A673 (cell line): ENCODE measurements at regions of chr19 and their contacts with region 1.

Region 1: DNA sequence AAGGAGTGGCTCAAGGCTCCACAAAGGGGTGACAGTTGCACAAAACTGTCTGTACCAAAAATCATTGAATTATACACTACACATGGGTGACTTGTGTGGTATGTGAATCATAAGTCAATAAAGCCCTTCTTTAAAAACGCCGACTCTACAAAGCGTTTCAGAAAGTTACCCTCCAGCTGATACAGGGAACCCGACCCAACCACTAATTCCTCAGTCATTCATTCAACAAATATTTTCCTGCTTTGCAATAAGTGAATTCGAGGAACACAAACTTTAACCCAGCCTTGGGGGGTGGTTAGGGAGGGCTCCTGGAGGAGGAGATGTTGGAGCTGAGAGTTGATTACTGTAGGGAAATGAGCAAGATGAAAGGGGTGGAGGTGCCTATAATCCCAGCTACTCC is 32.0 kb downstream of the LTBP4 start:
- DNase-seq: no peak
- H3K4me3 ChIP-seq: no peak overlapping the region
- H3K27ac ChIP-seq: no peak overlapping the region
- H3K4me1 ChIP-seq: no peaks in the 10 kb centered on the region
- H3K27me3 ChIP-seq: no peaks in the 10 kb centered on the region
- CTCF ChIP-seq: no peak

Region 2: GRCh38 chr19:40139533-40140287 is 493.5 kb before region 1 on chr19:
- CTCF ChIA-PET with region 1: no interaction called
- POLR2A ChIA-PET with region 1: no interaction called
- intact Hi-C with region 1: loop called (anchors 10 kb)
- DNase-seq: peak; percentile 73
- H3K4me3 ChIP-seq: no peak overlapping the region
- H3K27ac ChIP-seq: no peak overlapping the region
- H3K4me1 ChIP-seq: peaks cover 24% of the 10 kb centered on the region
- H3K27me3 ChIP-seq: no peaks in the 10 kb centered on the region
- CTCF ChIP-seq: peak; percentile 80

Region 3: DNA sequence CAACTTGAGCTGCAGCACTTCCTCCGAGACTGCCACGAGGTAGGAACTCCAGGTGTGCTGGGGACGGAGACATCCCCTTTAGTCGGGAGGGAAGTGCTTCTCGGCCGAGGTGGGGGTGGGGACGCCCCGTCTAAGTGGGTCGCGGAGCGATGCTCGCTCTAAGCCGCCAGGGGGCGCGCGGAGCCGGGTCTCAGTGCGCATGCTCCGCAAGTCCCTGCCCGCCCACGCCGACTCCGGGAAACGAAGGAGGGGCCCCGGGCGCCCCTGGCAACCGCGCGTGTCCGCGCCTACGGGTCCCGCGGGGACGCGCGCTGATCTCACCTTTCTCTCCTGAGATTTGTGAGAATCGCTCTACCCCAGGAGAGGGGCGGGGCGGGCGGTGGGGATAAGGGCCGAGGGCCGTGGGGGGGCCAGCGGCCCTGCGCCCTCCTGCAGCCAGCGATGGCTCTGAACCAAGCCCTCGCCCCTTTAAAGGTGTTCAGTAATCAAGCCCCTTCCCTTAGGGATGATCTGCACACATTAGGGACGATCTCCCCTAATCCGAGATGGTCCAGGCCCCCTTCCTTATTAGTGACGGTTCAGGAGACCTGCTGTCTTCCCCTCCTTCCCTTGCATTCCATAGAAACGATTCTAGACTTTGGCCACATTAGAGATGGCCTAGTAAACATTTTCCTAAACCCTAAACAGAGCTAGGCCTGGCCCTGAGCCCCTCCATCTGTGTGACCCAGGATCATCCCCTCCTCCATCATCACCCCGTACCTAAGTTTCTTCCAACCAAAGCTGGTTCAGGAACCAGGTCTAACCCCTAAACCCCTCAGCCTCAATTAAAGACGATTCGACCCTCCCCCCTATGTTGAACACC is 103.9 kb before region 1 on chr19:
- CTCF ChIA-PET with region 1: interaction called, 3 read pairs
- POLR2A ChIA-PET with region 1: no interaction called
- intact Hi-C with region 1: loop called (anchors 10 kb)
- DNase-seq: peak; percentile 92
- H3K4me3 ChIP-seq: peak overlapping the region; percentile 30
- H3K27ac ChIP-seq: no peak overlapping the region
- H3K4me1 ChIP-seq: peaks cover 15% of the 10 kb centered on the region
- H3K27me3 ChIP-seq: no peaks in the 10 kb centered on the region
- CTCF ChIP-seq: peak; percentile 97

Region 4: DNA sequence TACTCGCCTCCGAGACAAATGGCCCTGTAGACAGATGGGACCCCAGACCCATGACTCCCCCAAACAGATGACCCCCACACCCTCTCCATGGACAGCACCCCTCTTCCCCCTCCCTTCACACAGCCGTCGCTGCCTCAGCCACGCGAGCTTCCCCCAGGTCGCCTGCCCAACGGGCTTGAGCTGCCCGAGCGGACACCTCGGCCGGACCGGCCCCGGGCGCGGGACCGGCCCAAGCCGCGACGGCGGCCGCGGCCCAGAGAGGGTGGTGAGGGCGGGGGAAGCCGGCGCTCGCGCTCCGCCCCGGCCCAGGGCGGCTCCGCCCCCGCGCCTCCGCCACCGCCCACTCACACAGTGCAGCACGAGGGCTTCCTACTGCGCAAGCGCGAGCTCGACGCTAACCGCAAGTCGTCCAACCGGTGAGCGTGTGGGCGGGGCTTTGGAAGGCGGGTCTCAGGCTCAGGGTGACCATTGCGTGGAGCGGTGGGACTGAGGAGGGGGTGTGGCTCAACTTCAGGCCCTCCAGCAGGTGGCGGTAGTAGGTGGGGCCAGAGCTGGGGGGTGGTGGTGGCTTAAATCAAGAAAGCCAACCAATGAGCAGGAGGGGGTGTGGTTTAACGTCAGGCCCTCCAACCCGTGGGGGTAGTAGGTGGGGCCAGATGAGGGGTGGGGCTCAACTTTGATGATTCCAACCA is 62.7 kb before region 1 on chr19:
- CTCF ChIA-PET with region 1: no interaction called
- POLR2A ChIA-PET with region 1: no interaction called
- intact Hi-C with region 1: no loop called
- DNase-seq: peak; percentile 100
- H3K4me3 ChIP-seq: peak overlapping the region; percentile 47
- H3K27ac ChIP-seq: no peak overlapping the region
- H3K4me1 ChIP-seq: peaks cover 5% of the 10 kb centered on the region
- H3K27me3 ChIP-seq: peaks cover 25% of the 10 kb centered on the region
- CTCF ChIP-seq: peak; percentile 63

Region 5: GRCh38 chr19:40621283-40621682 is 11.9 kb before region 1 on chr19:
- CTCF ChIA-PET with region 1: interaction called, 8 read pairs
- POLR2A ChIA-PET with region 1: interaction called, 12 read pairs
- intact Hi-C with region 1: no loop called
- DNase-seq: no peak
- H3K4me3 ChIP-seq: no peak overlapping the region
- H3K27ac ChIP-seq: no peak overlapping the region
- H3K4me1 ChIP-seq: peaks cover 10% of the 10 kb centered on the region
- H3K27me3 ChIP-seq: no peaks in the 10 kb centered on the region
- CTCF ChIP-seq: no peak